ENCODE measurements at regions of chr15 and their contacts with region 1.

Region 1: GRCh38 chr15:60580650-60581376 is 101.9 kb upstream of the ICE2 start:
- DNase-seq: peak; percentile 73
- H3K4me3 Mint-ChIP-seq: peak overlapping the region; percentile 60
- H3K27ac Mint-ChIP-seq: peak overlapping the region; percentile 85
- H3K4me1 Mint-ChIP-seq: peaks cover 90% of the 10 kb centered on the region
- H3K27me3 Mint-ChIP-seq: no peaks in the 10 kb centered on the region

Region 2: DNA sequence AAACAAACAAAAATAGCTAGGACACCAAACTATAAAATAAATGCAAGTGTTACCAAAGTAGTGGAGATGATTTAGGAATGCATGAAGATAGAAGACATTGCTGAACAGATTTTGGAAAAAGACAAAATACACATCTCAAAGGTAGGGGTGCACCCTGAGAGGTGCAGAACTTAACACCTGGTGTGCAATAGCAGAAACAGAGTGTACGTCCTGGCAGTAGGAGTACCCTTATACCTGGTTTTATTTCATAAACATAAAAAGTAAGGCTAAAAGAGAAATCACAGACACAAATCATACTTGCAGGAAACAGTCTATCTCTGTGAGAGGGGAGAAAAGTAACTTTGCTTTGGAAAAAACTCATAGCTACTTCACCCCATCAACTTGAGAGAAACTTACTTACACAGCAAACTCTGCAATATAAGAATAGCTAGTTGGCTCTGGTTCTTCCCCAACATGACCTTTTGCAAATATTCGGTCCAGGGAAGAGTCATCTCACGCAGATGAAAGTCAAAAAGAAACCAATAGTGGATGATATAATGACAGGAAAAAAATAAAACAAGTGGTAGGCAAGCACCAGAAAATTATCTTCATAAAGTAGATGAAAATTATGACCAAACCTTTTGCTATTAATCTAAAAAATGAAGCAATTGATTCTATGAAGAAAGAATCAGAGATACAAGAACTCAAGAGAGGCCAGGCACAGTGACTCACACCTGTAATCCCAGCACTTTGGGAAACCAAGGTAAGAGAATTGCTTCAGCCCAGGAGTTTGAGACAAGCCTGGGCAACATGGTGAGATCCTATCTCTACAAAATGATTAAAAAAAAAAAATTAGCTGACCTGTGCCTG is 782.8 kb before region 1 on chr15:
- CTCF ChIA-PET with region 1: no interaction called
- intact Hi-C with region 1: loop called (anchors 2 kb)
- DNase-seq: no peak
- H3K4me3 Mint-ChIP-seq: no peak overlapping the region
- H3K27ac Mint-ChIP-seq: peak overlapping the region; percentile 41
- H3K4me1 Mint-ChIP-seq: peaks cover 71% of the 10 kb centered on the region
- H3K27me3 Mint-ChIP-seq: no peaks in the 10 kb centered on the region

Region 3: GRCh38 chr15:60315878-60316277 is 264.9 kb before region 1 on chr15:
- CTCF ChIA-PET with region 1: no interaction called
- intact Hi-C with region 1: no loop called
- DNase-seq: peak; percentile 61
- H3K4me3 Mint-ChIP-seq: no peak overlapping the region
- H3K27ac Mint-ChIP-seq: no peak overlapping the region
- H3K4me1 Mint-ChIP-seq: peaks cover 8% of the 10 kb centered on the region
- H3K27me3 Mint-ChIP-seq: no peaks in the 10 kb centered on the region

Region 4: DNA sequence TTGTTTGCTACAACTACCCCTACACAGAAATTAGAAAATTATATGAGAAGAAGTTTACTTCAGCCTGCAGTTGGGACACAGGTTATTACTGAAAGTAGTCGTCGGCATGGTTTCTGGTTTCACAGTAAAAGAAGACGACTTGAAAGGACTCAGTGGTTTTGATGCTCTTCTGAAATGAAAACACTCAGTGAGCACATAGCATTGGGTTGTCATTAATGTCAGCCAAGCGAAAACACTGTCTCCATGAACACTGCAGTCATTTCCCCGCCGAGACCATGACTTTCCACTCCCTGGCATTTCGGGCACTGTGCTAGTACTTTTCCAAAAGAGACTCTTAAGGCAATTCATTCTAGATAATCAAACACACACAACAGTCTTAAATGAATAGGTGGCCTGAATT is 32.7 kb before region 1 on chr15:
- CTCF ChIA-PET with region 1: interaction called, 5 read pairs
- intact Hi-C with region 1: loop called (anchors 1 kb)
- DNase-seq: peak; percentile 83
- H3K4me3 Mint-ChIP-seq: peak overlapping the region; percentile 39
- H3K27ac Mint-ChIP-seq: peak overlapping the region; percentile 80
- H3K4me1 Mint-ChIP-seq: peaks cover 92% of the 10 kb centered on the region
- H3K27me3 Mint-ChIP-seq: no peaks in the 10 kb centered on the region

Region 5: GRCh38 chr15:60557191-60557618 is 23.6 kb before region 1 on chr15:
- CTCF ChIA-PET with region 1: interaction called, 5 read pairs
- intact Hi-C with region 1: loop called (anchors 2 kb)
- DNase-seq: peak; percentile 29
- H3K4me3 Mint-ChIP-seq: no peak overlapping the region
- H3K27ac Mint-ChIP-seq: peak overlapping the region; percentile 55
- H3K4me1 Mint-ChIP-seq: peaks cover 71% of the 10 kb centered on the region
- H3K27me3 Mint-ChIP-seq: no peaks in the 10 kb centered on the region

Region 6: DNA sequence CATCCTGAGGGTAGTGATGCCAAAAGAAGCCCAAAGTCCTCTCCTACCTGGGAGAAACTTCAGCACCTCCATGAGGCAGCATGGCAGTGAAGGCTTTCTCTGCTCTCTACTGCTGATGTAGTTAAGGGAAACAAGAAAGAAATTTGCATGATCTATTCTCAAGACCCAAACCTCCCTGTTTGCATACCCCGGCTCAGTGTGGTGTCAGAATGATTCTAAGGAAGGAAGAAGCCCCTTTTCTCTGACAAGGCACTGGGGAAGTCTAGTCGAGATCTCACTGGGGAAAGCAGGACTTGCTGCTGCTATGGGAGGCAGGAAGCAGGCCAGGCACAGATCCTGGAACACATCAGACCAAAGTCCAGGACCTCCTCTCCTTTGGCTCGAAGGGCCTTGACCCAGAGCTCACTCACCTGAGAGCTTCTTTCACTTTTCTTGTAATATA is 12.5 kb before region 1 on chr15:
- CTCF ChIA-PET with region 1: interaction called, 21 read pairs
- intact Hi-C with region 1: loop called (anchors 1 kb)
- DNase-seq: no peak
- H3K4me3 Mint-ChIP-seq: peak overlapping the region; percentile 8
- H3K27ac Mint-ChIP-seq: peak overlapping the region; percentile 57
- H3K4me1 Mint-ChIP-seq: peaks cover 86% of the 10 kb centered on the region
- H3K27me3 Mint-ChIP-seq: no peaks in the 10 kb centered on the region

Measured in activated naive CD4-positive, alpha-beta T cell treated with anti-CD3 and anti-CD28 coated beads for 36 hours (primary cell).